ENCODE measurements at regions of chr4 and their contacts with region 1.

Region 1: GRCh38 chr4:112327965-112328733 is 31.0 kb downstream of the ALPK1 start:
- DNase-seq: peak in 1 of 42 donors; percentile 28

Region 2: DNA sequence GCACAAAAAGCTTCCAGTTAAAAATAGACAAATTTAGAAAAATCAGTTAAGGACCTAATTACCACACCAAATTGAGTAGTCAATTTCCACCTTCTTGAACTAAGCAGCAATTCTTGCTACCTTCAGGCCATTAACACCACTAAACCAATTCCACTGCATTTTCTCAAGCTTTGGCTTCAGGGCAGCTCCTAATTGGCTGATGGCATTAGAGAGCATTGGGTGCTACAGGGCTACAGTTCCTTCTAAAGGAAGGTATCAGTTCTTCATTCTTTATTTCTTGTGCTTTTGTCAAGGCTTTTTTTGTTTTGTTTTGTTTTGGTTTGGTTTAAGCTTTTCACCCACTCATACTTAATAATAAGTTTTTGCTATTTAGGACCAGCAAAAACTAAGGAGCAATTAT is 273.0 kb before region 1 on chr4:
- intact Hi-C with region 1: no loop called
- DNase-seq: no peak

Region 3: DNA sequence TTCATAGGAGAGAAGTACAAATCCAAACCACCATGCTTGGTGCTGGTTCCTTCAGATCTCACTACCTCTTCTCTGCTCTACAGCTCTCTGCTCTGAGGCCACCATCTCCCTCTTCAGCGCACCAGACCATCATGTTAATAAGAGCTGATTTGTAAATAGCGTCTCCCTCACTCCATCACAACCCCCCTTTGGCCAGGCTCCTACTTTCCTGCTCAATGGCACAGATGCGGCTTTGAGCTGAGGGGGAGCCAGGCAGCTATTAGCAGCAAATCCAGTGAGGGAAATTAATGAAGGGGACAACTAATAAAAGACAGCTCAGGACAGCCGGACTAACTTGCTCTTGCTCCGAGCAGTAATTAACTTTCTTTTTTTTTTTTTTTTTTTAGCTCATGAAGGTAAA is 174.7 kb after region 1 on chr4:
- intact Hi-C with region 1: no loop called
- DNase-seq: no peak

Region 4: DNA sequence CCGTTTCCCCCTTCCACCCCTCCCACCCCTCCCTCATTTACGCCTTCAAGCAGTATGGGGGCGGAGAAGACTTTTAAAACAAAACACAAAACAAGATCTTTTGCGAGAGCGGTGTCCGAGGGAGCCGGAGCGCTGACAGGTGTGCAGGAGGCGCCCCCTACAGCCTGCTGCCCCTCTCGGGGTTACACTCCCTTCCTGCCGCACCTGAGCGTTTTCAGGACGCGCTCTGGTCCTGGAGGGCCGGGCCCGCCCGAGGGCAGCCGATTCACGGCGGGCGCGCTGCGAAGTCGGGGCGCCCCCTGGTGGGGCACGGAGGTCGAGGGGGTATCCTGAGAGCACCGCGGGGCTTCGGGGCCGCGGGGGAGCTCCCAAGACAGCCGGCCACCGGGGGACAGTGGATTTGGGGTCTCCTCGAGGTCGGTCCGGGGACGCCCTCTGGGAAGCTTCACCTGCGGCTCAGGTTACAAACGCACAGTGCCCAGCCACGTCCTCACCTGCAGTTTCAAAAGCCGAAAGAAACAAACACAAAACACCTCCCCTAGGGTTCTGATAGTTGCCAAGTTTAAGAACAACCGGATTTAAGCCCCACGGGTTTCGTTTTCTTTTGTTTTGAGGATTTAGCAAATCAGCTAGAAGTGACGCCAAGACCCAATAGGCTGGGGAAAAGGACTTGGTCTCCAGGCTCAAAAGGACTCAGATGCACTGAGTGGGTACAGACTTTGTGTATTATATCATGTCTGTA is 195.8 kb after region 1 on chr4:
- intact Hi-C with region 1: loop called (anchors 5 kb)
- DNase-seq: peak in 26 of 42 donors; percentile 12 to 73 (median 42)

Region 5: GRCh38 chr4:112616984-112617383 is 288.8 kb after region 1 on chr4:
- intact Hi-C with region 1: loop called (anchors 5 kb)
- DNase-seq: no peak

Region 6: DNA sequence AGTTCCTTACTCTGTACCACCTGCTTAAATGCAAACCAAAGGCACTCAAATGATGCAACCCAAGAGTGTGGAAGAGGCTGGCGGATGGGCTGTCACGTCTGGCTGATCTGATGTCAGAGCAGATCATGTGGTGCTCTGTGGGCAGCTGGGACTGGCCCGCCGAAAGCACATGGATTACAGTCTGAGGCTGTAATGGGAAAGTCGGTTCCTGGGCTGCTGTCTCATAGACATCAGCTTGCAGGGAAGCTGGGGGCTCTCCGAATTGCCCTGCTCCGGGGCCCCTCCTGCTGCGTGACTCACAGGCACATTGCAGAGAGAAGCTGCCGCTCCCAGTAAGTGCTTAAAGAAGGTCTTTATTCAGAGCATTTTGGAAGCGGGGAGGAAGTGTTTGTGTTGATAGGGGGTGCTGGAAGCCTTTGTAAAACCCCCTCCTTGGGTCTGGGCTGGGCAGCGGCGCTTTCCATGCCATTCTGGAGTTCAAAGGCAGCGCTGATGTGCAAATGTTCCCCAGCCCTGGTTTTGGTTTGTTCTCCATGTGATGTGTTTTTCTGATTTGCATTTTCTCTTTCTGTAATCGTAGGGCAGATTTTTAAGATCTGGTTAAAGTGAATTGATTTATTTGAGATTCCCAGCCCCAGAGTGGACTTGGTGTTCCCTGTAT is 489.9 kb after region 1 on chr4:
- intact Hi-C with region 1: no loop called
- DNase-seq: peak; percentile 78 to 97 (median 90)

Measured in head of caudate nucleus (tissue), 42 donors.